CD4-positive, alpha-beta memory T cell (primary cell): ENCODE measurements at regions of chr2 and their contacts with region 1.

Region 1: GRCh38 chr2:30862054-30862651 is 54.9 kb upstream of the CAPN13 start:
- DNase-seq: peak; percentile 32 to 51 (median 42)
- H3K4me3 ChIP-seq: no peak overlapping the region
- H3K4me3 Mint-ChIP-seq: no peak overlapping the region
- H3K27ac ChIP-seq: no peak overlapping the region
- H3K27ac Mint-ChIP-seq: no peak overlapping the region
- H3K4me1 ChIP-seq: no peaks in the 10 kb centered on the region
- H3K4me1 Mint-ChIP-seq: peaks cover 4 to 12% (median 6%) of the 10 kb centered on the region in 4 donors
- H3K27me3 ChIP-seq: no peaks in the 10 kb centered on the region
- H3K27me3 Mint-ChIP-seq: peaks cover 3 to 6% of the 10 kb centered on the region in 2 donors

Region 2: DNA sequence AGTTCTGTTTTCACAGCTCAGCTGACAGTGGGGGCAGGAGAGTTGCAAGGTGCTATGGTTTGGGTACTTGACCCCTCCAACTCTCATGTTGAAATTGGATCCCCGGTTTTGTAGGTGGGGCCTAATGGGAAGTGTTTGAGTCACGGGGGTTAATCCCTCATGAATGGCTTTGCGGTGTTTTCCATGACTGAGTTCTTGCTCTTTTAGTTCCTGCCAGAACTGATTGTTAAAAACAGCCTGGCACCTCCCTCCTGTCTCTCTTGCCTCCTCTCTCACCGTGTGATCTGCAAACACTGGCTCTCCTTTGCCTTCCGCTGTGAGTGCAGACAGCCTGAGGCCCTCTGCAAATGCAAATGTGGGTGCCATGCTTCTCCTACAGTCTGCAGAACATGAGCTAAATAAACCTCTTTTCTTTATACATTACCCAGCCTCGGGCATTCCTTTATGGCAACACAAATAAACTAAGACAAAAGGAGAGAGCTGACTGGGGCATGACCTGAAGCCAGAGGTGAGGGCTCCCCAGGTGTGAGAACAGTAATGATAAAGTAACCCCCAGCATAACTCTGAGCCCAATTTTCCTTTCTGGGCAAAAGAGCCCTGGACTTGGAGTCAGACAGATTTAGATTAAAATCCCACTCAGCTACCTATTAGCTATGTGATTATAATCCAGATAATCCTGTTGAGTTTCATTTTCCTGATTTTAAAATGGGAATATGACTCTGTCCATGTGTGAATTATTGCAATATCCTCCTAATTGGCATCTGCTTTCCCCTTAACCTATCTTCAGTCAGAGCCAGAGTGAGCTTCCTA is 10.0 kb after region 1 on chr2:
- CTCF ChIA-PET with region 1: interaction called, 11 read pairs
- POLR2A ChIA-PET with region 1: no interaction called
- intact Hi-C with region 1: no loop called
- DNase-seq: no peak
- H3K4me3 ChIP-seq: no peak overlapping the region
- H3K4me3 Mint-ChIP-seq: no peak overlapping the region
- H3K27ac ChIP-seq: no peak overlapping the region
- H3K27ac Mint-ChIP-seq: no peak overlapping the region
- H3K4me1 ChIP-seq: no peaks in the 10 kb centered on the region
- H3K4me1 Mint-ChIP-seq: no peaks in the 10 kb centered on the region
- H3K27me3 ChIP-seq: no peaks in the 10 kb centered on the region
- H3K27me3 Mint-ChIP-seq: peaks cover 7 to 8% of the 10 kb centered on the region in 2 donors

Region 3: GRCh38 chr2:31363956-31364750 is 502.0 kb after region 1 on chr2:
- CTCF ChIA-PET with region 1: no interaction called
- POLR2A ChIA-PET with region 1: no interaction called
- intact Hi-C with region 1: no loop called
- DNase-seq: no peak
- H3K4me3 ChIP-seq: no peak overlapping the region
- H3K4me3 Mint-ChIP-seq: no peak overlapping the region
- H3K27ac ChIP-seq: no peak overlapping the region
- H3K27ac Mint-ChIP-seq: peak overlapping the region in 1 of 7 donors; percentile 44
- H3K4me1 ChIP-seq: no peaks in the 10 kb centered on the region
- H3K4me1 Mint-ChIP-seq: no peaks in the 10 kb centered on the region
- H3K27me3 ChIP-seq: no peaks in the 10 kb centered on the region
- H3K27me3 Mint-ChIP-seq: peaks cover 5 to 8% of the 10 kb centered on the region in 2 donors